ENCODE measurements at regions of chr1 and their contacts with region 1.

Region 1: GRCh38 chr1:23168457-23169194 is at the start of gene LUZP1:
- H3K4me3 Mint-ChIP-seq: peak within 1 kb of the TSS; percentile 100
- H3K27ac Mint-ChIP-seq: peak within 1 kb of the TSS; percentile 99
- H3K4me1 Mint-ChIP-seq: peaks cover 38% of the 10 kb centered on the region
- H3K27me3 Mint-ChIP-seq: peaks cover 3% of the 10 kb centered on the region

Region 2: GRCh38 chr1:23114424-23115079 is 54.1 kb before region 1 on chr1:
- intact Hi-C with region 1: loop called (anchors 2 kb)
- H3K4me3 Mint-ChIP-seq: no peak overlapping the region
- H3K27ac Mint-ChIP-seq: peak overlapping the region; percentile 75
- H3K4me1 Mint-ChIP-seq: peaks cover 55% of the 10 kb centered on the region
- H3K27me3 Mint-ChIP-seq: no peaks in the 10 kb centered on the region

Region 3: GRCh38 chr1:23184212-23184934 is 15.7 kb after region 1 on chr1:
- intact Hi-C with region 1: no loop called
- H3K4me3 Mint-ChIP-seq: peak overlapping the region; percentile 37
- H3K27ac Mint-ChIP-seq: no peak overlapping the region
- H3K4me1 Mint-ChIP-seq: peaks cover 10% of the 10 kb centered on the region
- H3K27me3 Mint-ChIP-seq: peaks cover 21% of the 10 kb centered on the region

Region 4: GRCh38 chr1:23282957-23283356 is 114.3 kb after region 1 on chr1:
- intact Hi-C with region 1: loop called (anchors 5 kb)
- H3K4me3 Mint-ChIP-seq: no peak overlapping the region
- H3K27ac Mint-ChIP-seq: peak overlapping the region; percentile 76
- H3K4me1 Mint-ChIP-seq: peaks cover 53% of the 10 kb centered on the region
- H3K27me3 Mint-ChIP-seq: no peaks in the 10 kb centered on the region

Measured in dendritic cell treated with granulocyte-macrophage colony-stimulating factor and Interleukin-4, amounts not matched to agents 40 ng/mL and 50 ng/mL, for 4 days (primary cell).